Panc1 (cell line): ENCODE measurements at regions of chr7 and their contacts with region 1.

Region 1: GRCh38 chr7:28020302-28020940 is 160.2 kb downstream of the JAZF1 start:
- DNase-seq: peak; percentile 81
- ATAC-seq: peak; percentile 95
- H3K4me3 ChIP-seq: peak overlapping the region in 1 of 2 experiments; percentile 21; a peak in 1 of 4 replicates
- H3K27ac ChIP-seq: peak overlapping the region; percentile 66
- H3K4me1 ChIP-seq: peaks cover 8% of the 10 kb centered on the region
- H3K27me3 ChIP-seq: no peaks in the 10 kb centered on the region
- CTCF ChIP-seq: peak; percentile 96

Region 2: GRCh38 chr7:27689591-27690164 is 330.7 kb before region 1 on chr7:
- CTCF ChIA-PET with region 1: no interaction called
- POLR2A ChIA-PET with region 1: no interaction called
- in situ Hi-C with region 1: no loop called
- intact Hi-C with region 1: loop called (anchors 2 kb)
- DNase-seq: no peak
- ATAC-seq: peak; percentile 94
- H3K4me3 ChIP-seq: no peak overlapping the region
- H3K27ac ChIP-seq: no peak overlapping the region
- H3K4me1 ChIP-seq: no peaks in the 10 kb centered on the region
- H3K27me3 ChIP-seq: no peaks in the 10 kb centered on the region
- CTCF ChIP-seq: peak; percentile 84

Region 3: GRCh38 chr7:27784393-27785053 is 235.9 kb before region 1 on chr7:
- CTCF ChIA-PET with region 1: no interaction called
- POLR2A ChIA-PET with region 1: no interaction called
- in situ Hi-C with region 1: no loop called
- intact Hi-C with region 1: loop called (anchors 10 kb)
- DNase-seq: peak; percentile 81
- ATAC-seq: peak; percentile 95
- H3K4me3 ChIP-seq: no peak overlapping the region
- H3K27ac ChIP-seq: peak overlapping the region; percentile 36; the same call in 1 of the 2 replicates
- H3K4me1 ChIP-seq: peaks cover 26% of the 10 kb centered on the region
- H3K27me3 ChIP-seq: no peaks in the 10 kb centered on the region
- CTCF ChIP-seq: peak; percentile 83

Region 4: GRCh38 chr7:27921081-27921836 is 99.2 kb before region 1 on chr7:
- CTCF ChIA-PET with region 1: interaction called, 3 read pairs
- POLR2A ChIA-PET with region 1: no interaction called
- in situ Hi-C with region 1: no loop called
- intact Hi-C with region 1: loop called (anchors 5 kb)
- DNase-seq: peak; percentile 61
- ATAC-seq: peak; percentile 82
- H3K4me3 ChIP-seq: peak overlapping the region in 1 of 2 experiments; percentile 22; a peak in 1 of 4 replicates
- H3K27ac ChIP-seq: peak overlapping the region; percentile 52
- H3K4me1 ChIP-seq: peaks cover 18% of the 10 kb centered on the region; the same call in 1 of the 2 replicates
- H3K27me3 ChIP-seq: no peaks in the 10 kb centered on the region
- CTCF ChIP-seq: peak; percentile 75

Region 5: GRCh38 chr7:28078036-28078901 is 57.8 kb after region 1 on chr7:
- CTCF ChIA-PET with region 1: no interaction called
- POLR2A ChIA-PET with region 1: no interaction called
- in situ Hi-C with region 1: no loop called
- intact Hi-C with region 1: loop called (anchors 5 kb)
- DNase-seq: no peak
- ATAC-seq: peak; percentile 73
- H3K4me3 ChIP-seq: no peak overlapping the region
- H3K27ac ChIP-seq: peak overlapping the region; percentile 66
- H3K4me1 ChIP-seq: peaks cover 13% of the 10 kb centered on the region
- H3K27me3 ChIP-seq: no peaks in the 10 kb centered on the region
- CTCF ChIP-seq: peak; percentile 99